CD8-positive, alpha-beta memory T cell (primary cell): ENCODE measurements at regions of chr6 and their contacts with region 1.

Region 1: DNA sequence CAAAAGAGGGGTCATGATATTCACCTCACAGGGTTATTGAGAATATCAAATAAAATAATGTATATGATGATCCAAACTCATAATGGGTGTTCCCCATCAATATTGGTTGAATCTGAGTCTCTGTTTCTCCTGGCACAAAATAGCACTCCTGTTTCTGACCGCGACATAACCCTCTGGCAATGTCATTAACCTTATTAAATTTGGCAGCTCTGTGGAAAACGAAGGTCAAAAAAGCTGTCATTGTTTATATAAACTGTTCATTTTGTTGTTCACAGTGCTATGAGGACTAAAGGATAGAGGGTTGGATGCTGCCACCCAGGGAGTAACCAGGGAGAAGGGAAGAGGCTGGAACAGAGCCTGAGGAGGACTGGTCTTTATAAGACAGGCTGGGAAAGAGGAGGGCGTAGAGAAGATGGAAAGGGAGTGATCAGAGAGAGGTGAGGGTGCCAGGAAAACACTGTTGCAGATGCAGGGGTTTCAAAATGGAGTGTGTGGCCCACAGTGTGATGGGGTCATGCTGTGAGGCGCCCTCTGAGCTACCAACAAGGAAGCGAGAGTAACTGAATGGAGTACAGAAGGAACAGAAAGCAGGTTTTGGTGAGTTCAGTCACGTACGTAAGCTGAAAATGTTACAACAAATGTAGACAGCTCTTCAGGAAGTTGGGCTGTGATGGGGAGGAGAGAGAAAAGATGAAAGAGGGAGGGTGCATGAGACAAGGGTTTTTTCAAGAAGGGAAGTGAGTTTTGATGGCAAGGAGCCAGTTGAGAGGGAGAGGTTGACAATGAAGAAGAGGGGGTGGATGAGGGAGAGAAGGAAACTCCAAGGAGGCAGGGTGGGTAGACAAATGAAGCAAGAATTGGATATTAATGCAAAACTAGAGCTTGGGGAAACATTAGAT is 251.6 kb upstream of the TAB2 start:
- DNase-seq: peak in 3 of 5 donors; percentile 68 to 84 (median 75)
- H3K4me3 ChIP-seq: peak overlapping the region; percentile 35
- H3K4me3 Mint-ChIP-seq: peak overlapping the region in 6 of 7 donors; percentile 20 to 75 (median 54)
- H3K27ac ChIP-seq: no peak overlapping the region
- H3K27ac Mint-ChIP-seq: peak overlapping the region; percentile 40 to 96 (median 93)
- H3K4me1 ChIP-seq: peaks cover 33% of the 10 kb centered on the region
- H3K4me1 Mint-ChIP-seq: peaks cover 21 to 40% (median 32%) of the 10 kb centered on the region in 3 donors
- H3K27me3 ChIP-seq: no peaks in the 10 kb centered on the region
- H3K27me3 Mint-ChIP-seq: no peaks in the 10 kb centered on the region

Region 2: DNA sequence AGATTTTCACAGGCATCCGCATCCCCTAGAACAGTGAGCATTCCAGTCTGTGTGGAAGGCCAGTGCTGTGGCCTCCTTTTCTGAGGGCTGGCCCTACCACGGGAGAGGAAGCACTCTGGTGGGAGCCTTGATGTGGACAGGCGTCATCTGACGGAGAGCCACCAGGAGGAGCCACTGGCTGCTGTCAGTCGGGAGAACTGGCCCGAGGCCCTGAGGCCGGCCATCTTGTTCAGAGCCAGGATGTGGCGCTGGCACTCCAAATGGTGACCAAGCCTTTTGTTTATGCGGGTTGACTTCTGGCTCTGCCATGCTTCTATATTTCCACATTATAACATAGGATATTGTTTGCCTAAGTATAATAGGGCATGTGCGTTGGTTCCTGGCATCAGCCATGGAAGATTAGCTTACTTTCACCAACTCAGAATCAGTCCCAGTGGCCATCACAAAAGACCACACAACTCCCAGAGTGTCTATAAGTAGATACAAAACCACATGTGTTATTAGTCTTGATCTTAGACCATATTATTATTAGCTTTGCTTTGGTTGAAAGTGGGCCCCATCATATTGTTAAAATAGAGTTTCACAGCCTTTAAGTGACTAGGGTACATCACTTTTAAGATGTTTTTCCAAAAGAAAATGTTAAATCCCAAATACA is 22.3 kb before region 1 on chr6:
- CTCF ChIA-PET with region 1: interaction called, 10 read pairs
- POLR2A ChIA-PET with region 1: no interaction called
- DNase-seq: no peak
- H3K4me3 ChIP-seq: no peak overlapping the region
- H3K4me3 Mint-ChIP-seq: no peak overlapping the region
- H3K27ac ChIP-seq: no peak overlapping the region
- H3K27ac Mint-ChIP-seq: no peak overlapping the region
- H3K4me1 ChIP-seq: peaks cover 22% of the 10 kb centered on the region
- H3K4me1 Mint-ChIP-seq: peaks cover 30 to 53% (median 39%) of the 10 kb centered on the region in 3 donors
- H3K27me3 ChIP-seq: no peaks in the 10 kb centered on the region
- H3K27me3 Mint-ChIP-seq: no peaks in the 10 kb centered on the region

Region 3: GRCh38 chr6:149129371-149130077 is 63.6 kb after region 1 on chr6:
- CTCF ChIA-PET with region 1: no interaction called
- POLR2A ChIA-PET with region 1: no interaction called
- DNase-seq: no peak
- H3K4me3 ChIP-seq: no peak overlapping the region
- H3K4me3 Mint-ChIP-seq: peak overlapping the region in 1 of 7 donors; percentile 4
- H3K27ac ChIP-seq: no peak overlapping the region
- H3K27ac Mint-ChIP-seq: peak overlapping the region in 7 of 8 donors; percentile 2 to 92 (median 83)
- H3K4me1 ChIP-seq: peaks cover 44% of the 10 kb centered on the region
- H3K4me1 Mint-ChIP-seq: peaks cover 32 to 69% (median 66%) of the 10 kb centered on the region in 3 donors
- H3K27me3 ChIP-seq: no peaks in the 10 kb centered on the region
- H3K27me3 Mint-ChIP-seq: peaks cover 0 to 3% of the 10 kb centered on the region in 2 donors